CD8-positive, alpha-beta T cell (primary cell): ENCODE measurements at regions of chr1 and their contacts with region 1.

Region 1: GRCh38 chr1:2255420-2256369 is 27.6 kb downstream of the SKI start:
- DNase-seq: peak; percentile 59 to 97 (median 75)
- ATAC-seq: peak; percentile 66
- H3K4me3 ChIP-seq: no peak overlapping the region
- H3K4me3 Mint-ChIP-seq: no peak overlapping the region
- H3K27ac ChIP-seq: peak overlapping the region; percentile 97 to 100
- H3K27ac Mint-ChIP-seq: no peak overlapping the region
- H3K4me1 ChIP-seq: peaks cover 86% of the 10 kb centered on the region
- H3K4me1 Mint-ChIP-seq: peaks cover 54% of the 10 kb centered on the region
- H3K27me3 ChIP-seq: no peaks in the 10 kb centered on the region
- H3K27me3 Mint-ChIP-seq: no peaks in the 10 kb centered on the region
- CTCF ChIP-seq: no peak

Region 2: GRCh38 chr1:899636-900317 is 1355.9 kb before region 1 on chr1:
- CTCF ChIA-PET with region 1: no interaction called
- POLR2A ChIA-PET with region 1: no interaction called
- intact Hi-C with region 1: no loop called
- DNase-seq: peak in 1 of 9 experiments; percentile 2
- ATAC-seq: no peak
- H3K4me3 ChIP-seq: no peak overlapping the region
- H3K4me3 Mint-ChIP-seq: no peak overlapping the region
- H3K27ac ChIP-seq: no peak overlapping the region
- H3K27ac Mint-ChIP-seq: no peak overlapping the region
- H3K4me1 ChIP-seq: peaks cover 13% of the 10 kb centered on the region
- H3K4me1 Mint-ChIP-seq: peaks cover 11% of the 10 kb centered on the region
- H3K27me3 ChIP-seq: peaks cover 2 to 4% of the 10 kb centered on the region in 2 experiments
- H3K27me3 Mint-ChIP-seq: peaks cover 37% of the 10 kb centered on the region
- CTCF ChIP-seq: no peak

Region 3: GRCh38 chr1:1406817-1407635 is 848.7 kb before region 1 on chr1 and contains the start of gene MRPL20:
- CTCF ChIA-PET with region 1: no interaction called
- POLR2A ChIA-PET with region 1: no interaction called
- intact Hi-C with region 1: no loop called
- DNase-seq: peak; percentile 89 to 98 (median 96)
- ATAC-seq: peak; percentile 95
- H3K4me3 ChIP-seq: peak within 1 kb of the TSS; percentile 79 to 87
- H3K4me3 Mint-ChIP-seq: peak within 1 kb of the TSS; percentile 94
- H3K27ac ChIP-seq: peak within 1 kb of the TSS; percentile 81 to 87
- H3K27ac Mint-ChIP-seq: peak within 1 kb of the TSS; percentile 96
- H3K4me1 ChIP-seq: peaks cover 20% of the 10 kb centered on the region
- H3K4me1 Mint-ChIP-seq: peaks cover 46% of the 10 kb centered on the region
- H3K27me3 ChIP-seq: no peaks in the 10 kb centered on the region
- H3K27me3 Mint-ChIP-seq: no peaks in the 10 kb centered on the region
- CTCF ChIP-seq: no peak
- total RNA-seq, gene MRPL20: 92.6 to 92.7 TPM

Region 4: GRCh38 chr1:2233997-2234761 is 21.5 kb before region 1 on chr1:
- CTCF ChIA-PET with region 1: interaction called, 8 read pairs
- POLR2A ChIA-PET with region 1: interaction called, 78 read pairs
- intact Hi-C with region 1: loop called (anchors 1 kb)
- DNase-seq: peak; percentile 62 to 94 (median 83)
- ATAC-seq: peak; percentile 55
- H3K4me3 ChIP-seq: peak overlapping the region; percentile 25 to 82
- H3K4me3 Mint-ChIP-seq: peak overlapping the region; percentile 98
- H3K27ac ChIP-seq: peak overlapping the region; percentile 54 to 80
- H3K27ac Mint-ChIP-seq: peak overlapping the region; percentile 98
- H3K4me1 ChIP-seq: peaks cover 83% of the 10 kb centered on the region
- H3K4me1 Mint-ChIP-seq: peaks cover 71% of the 10 kb centered on the region
- H3K27me3 ChIP-seq: no peaks in the 10 kb centered on the region
- H3K27me3 Mint-ChIP-seq: no peaks in the 10 kb centered on the region
- CTCF ChIP-seq: no peak

Region 5: GRCh38 chr1:2290595-2291510 is 35.2 kb after region 1 on chr1:
- CTCF ChIA-PET with region 1: interaction called, 4 read pairs
- POLR2A ChIA-PET with region 1: interaction called, 11 read pairs
- intact Hi-C with region 1: no loop called
- DNase-seq: peak; percentile 44 to 91 (median 77)
- ATAC-seq: peak; percentile 65
- H3K4me3 ChIP-seq: peak overlapping the region; percentile 50 to 54
- H3K4me3 Mint-ChIP-seq: peak overlapping the region; percentile 80
- H3K27ac ChIP-seq: peak overlapping the region; percentile 58 to 60
- H3K27ac Mint-ChIP-seq: peak overlapping the region; percentile 95
- H3K4me1 ChIP-seq: peaks cover 88% of the 10 kb centered on the region
- H3K4me1 Mint-ChIP-seq: peaks cover 83% of the 10 kb centered on the region
- H3K27me3 ChIP-seq: no peaks in the 10 kb centered on the region
- H3K27me3 Mint-ChIP-seq: no peaks in the 10 kb centered on the region
- CTCF ChIP-seq: no peak

Region 6: DNA sequence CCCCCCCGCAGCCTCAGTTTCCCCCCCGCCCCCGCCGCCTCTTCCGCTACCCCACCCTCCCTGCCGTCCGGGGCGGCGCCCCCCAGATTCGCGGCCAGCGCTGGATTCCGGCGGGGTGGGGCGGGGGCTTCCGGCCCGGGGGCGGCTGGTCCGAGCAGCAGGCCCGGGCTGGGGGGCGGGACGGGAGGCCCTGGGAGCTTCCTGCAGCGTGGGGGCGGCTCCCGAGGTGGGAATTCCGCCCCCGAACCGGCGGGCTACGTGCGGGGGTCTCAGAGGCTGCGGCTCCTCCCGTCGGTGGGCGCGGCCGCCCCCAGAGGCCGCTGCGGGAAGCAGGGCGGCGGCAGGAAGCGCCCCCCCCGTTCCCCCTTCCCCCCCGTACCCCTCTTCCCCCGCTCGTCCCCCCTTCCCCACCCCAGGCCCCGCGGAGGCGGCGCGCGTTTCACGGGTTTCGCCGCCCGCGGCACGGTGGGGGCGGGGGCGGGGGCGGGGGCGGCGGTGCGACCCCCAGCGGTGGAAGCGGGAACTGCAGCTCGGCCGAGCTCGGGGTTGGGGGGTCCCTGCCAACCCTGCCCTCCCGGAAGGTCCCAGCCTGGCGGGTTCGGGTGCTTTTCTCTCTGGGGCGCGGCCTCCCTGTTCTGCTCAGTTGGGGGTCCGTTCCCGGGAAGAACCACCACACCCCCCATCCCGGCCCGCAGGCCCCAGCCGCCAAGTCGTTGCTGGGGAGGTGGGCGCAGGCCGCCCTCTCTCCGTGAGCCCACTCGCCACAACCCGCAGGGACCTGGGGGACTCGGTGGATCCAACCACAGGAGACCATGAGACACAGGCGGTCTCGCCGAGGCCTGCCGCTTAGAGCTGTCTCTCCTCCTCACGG is 59.3 kb after region 1 on chr1:
- CTCF ChIA-PET with region 1: interaction called, 4 read pairs
- POLR2A ChIA-PET with region 1: interaction called, 4 read pairs
- intact Hi-C with region 1: loop called (anchors 1 kb)
- DNase-seq: peak; percentile 52 to 89 (median 73)
- ATAC-seq: peak; percentile 50
- H3K4me3 ChIP-seq: peak overlapping the region; percentile 52 to 58
- H3K4me3 Mint-ChIP-seq: peak overlapping the region; percentile 64
- H3K27ac ChIP-seq: peak overlapping the region; percentile 70 to 82
- H3K27ac Mint-ChIP-seq: peak overlapping the region; percentile 79
- H3K4me1 ChIP-seq: peaks cover 76% of the 10 kb centered on the region
- H3K4me1 Mint-ChIP-seq: peaks cover 33% of the 10 kb centered on the region
- H3K27me3 ChIP-seq: no peaks in the 10 kb centered on the region
- H3K27me3 Mint-ChIP-seq: no peaks in the 10 kb centered on the region
- CTCF ChIP-seq: peak; percentile 97

Region 7: DNA sequence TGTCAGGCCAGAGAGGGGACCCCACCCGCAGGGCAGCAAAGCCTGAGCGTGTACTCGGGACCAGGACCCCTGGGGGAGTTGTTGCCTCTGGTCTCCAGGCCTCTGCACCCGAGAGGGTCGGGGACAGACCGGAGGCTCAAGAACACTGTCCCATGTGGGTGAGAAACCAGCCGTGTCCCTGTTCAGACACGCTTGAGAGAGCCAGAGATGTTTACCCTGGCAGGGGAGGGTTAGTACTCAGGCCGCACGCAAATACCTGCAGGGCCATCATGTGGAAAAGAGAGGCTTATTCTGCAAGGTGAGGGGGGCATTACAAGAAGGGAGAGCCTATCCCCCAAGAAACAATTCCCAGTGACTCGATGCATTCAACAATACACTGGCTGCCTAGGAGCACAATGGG is 1124.8 kb after region 1 on chr1:
- CTCF ChIA-PET with region 1: no interaction called
- POLR2A ChIA-PET with region 1: no interaction called
- intact Hi-C with region 1: no loop called
- DNase-seq: no peak
- ATAC-seq: no peak
- H3K4me3 ChIP-seq: no peak overlapping the region
- H3K4me3 Mint-ChIP-seq: no peak overlapping the region
- H3K27ac ChIP-seq: no peak overlapping the region
- H3K27ac Mint-ChIP-seq: no peak overlapping the region
- H3K4me1 ChIP-seq: no peaks in the 10 kb centered on the region
- H3K4me1 Mint-ChIP-seq: no peaks in the 10 kb centered on the region
- H3K27me3 ChIP-seq: no peaks in the 10 kb centered on the region
- H3K27me3 Mint-ChIP-seq: peaks cover 7% of the 10 kb centered on the region
- CTCF ChIP-seq: no peak